Activated B cell treated with CpG ODN at 0.5 μM for 24 hours (primary cell): ENCODE measurements at regions of chr17 and their contacts with region 1.

Region 1: DNA sequence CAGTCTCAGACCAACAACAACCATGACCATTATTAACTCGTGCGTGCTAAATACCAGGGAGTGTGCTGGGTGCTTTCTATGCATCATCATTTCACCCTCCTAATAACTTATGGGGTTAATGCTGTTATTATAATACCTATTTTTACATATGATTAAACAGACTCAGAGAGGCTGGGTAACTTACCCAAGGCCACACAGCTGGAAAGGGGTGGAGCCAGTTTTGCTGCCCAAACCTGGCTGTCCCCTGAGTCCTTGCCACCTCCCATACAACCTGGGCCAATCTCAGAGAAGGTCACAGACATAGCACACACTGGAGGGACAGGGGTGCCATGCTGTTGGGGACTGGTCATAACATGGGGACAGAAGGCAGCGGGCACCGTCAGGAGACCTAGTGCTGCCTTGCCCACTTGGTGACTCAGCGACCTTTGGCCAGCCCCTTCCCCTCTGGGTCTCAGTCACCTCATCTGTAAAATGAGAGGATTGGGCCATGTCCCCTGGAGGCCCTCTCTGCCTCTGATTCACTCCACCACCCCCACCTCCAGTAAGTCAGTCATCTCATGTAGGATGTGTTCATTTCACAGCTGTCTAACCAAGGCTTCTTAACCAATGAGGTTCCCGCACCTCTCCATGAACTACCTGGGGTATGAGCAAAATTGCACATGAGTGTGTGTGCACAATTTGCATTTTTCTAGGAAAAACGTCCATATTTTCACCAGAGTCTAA is 11.4 kb upstream of the FADS6 start:
- DNase-seq: no peak
- ATAC-seq: no peak
- H3K4me3 Mint-ChIP-seq: no peak overlapping the region
- H3K27ac Mint-ChIP-seq: no peak overlapping the region
- H3K4me1 Mint-ChIP-seq: no peaks in the 10 kb centered on the region
- H3K27me3 Mint-ChIP-seq: peaks cover 35% of the 10 kb centered on the region
- CTCF ChIP-seq: no peak

Region 2: GRCh38 chr17:74807925-74808324 is 96.9 kb before region 1 on chr17:
- CTCF ChIA-PET with region 1: no interaction called
- POLR2A ChIA-PET with region 1: no interaction called
- intact Hi-C with region 1: no loop called
- DNase-seq: no peak
- ATAC-seq: no peak
- H3K4me3 Mint-ChIP-seq: no peak overlapping the region
- H3K27ac Mint-ChIP-seq: no peak overlapping the region
- H3K4me1 Mint-ChIP-seq: no peaks in the 10 kb centered on the region
- H3K27me3 Mint-ChIP-seq: no peaks in the 10 kb centered on the region
- CTCF ChIP-seq: no peak

Region 3: GRCh38 chr17:74935585-74936469 is 31.0 kb after region 1 on chr17 and contains the start of gene OTOP3:
- CTCF ChIA-PET with region 1: no interaction called
- POLR2A ChIA-PET with region 1: no interaction called
- intact Hi-C with region 1: loop called (anchors 5 kb)
- DNase-seq: no peak
- ATAC-seq: no peak
- H3K4me3 Mint-ChIP-seq: no peak within 1 kb of the TSS
- H3K27ac Mint-ChIP-seq: no peak within 1 kb of the TSS
- H3K4me1 Mint-ChIP-seq: no peaks in the 10 kb centered on the region
- H3K27me3 Mint-ChIP-seq: peaks cover 60% of the 10 kb centered on the region
- CTCF ChIP-seq: no peak
- total RNA-seq, gene OTOP3: not detected in 2 replicates